ENCODE measurements at regions of chr19 and their contacts with region 1.

Region 1: GRCh38 chr19:11551603-11552235 is 7.3 kb downstream of the ELOF1 start:
- DNase-seq: no peak
- ATAC-seq: no peak
- H3K4me3 ChIP-seq: no peak overlapping the region
- H3K4me3 Mint-ChIP-seq: no peak overlapping the region
- H3K27ac ChIP-seq: no peak overlapping the region
- H3K27ac Mint-ChIP-seq: no peak overlapping the region
- H3K4me1 ChIP-seq: peaks cover 22 to 39% of the 10 kb centered on the region in 2 donors
- H3K4me1 Mint-ChIP-seq: peaks cover 38% of the 10 kb centered on the region
- H3K27me3 ChIP-seq: no peaks in the 10 kb centered on the region
- H3K27me3 Mint-ChIP-seq: no peaks in the 10 kb centered on the region
- CTCF ChIP-seq: no peak

Region 2: GRCh38 chr19:11324079-11324661 is 227.5 kb before region 1 on chr19:
- CTCF ChIA-PET with region 1: no interaction called
- POLR2A ChIA-PET with region 1: interaction called, 11 read pairs
- intact Hi-C with region 1: no loop called
- DNase-seq: peak; percentile 61
- ATAC-seq: peak; percentile 57
- H3K4me3 ChIP-seq: peak overlapping the region in 1 of 5 experiments; percentile 21
- H3K4me3 Mint-ChIP-seq: peak overlapping the region; percentile 75
- H3K27ac ChIP-seq: peak overlapping the region in 1 of 2 donors; percentile 61
- H3K27ac Mint-ChIP-seq: peak overlapping the region; percentile 68
- H3K4me1 ChIP-seq: peaks cover 31 to 43% of the 10 kb centered on the region in 2 donors
- H3K4me1 Mint-ChIP-seq: peaks cover 38% of the 10 kb centered on the region
- H3K27me3 ChIP-seq: peaks cover 0 to 5% (median 0%) of the 10 kb centered on the region in 4 experiments
- H3K27me3 Mint-ChIP-seq: no peaks in the 10 kb centered on the region
- CTCF ChIP-seq: no peak

Region 3: DNA sequence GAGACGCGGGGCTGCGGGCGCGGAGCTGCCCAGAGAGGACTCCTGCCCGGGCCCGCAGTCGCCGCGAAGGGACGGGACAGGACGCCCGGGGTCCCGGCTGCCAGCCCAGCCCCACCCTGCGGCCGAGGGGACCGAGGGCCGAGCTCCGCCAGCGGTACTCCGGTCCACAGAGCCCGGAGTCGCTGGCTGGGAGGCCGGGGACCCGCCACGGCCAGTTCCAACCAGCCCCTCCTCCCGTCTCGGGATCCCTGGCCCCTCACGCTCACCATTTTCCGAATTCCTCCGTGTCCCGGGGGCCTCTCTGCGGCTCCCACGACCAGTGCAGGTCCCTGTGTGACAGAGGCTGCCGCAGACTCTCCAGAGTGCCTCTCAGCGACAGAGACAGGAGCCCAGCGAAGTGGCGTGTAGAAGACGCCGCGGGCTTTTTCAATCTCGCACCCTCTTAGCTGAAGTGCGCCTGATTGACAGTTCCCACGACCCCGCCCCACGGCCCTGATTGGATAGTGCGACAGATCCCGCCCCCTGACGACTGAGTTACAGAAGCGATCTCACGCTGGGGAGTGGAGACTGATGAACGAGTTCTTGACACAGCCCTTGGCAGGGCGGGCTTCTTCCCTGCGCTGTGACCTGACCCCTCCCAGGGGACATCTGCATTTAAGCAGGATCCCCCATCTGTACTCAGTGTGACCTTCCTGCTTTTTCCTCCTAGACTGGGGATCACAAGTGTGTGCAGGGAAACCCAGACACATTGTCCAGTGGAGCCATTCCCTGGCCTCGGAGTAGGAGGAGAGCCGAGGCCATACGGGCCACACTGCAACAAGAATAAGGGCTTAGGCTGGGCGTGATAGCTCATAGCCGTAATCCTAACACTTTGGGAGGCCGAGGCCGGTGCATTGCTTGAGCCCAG is 143.1 kb after region 1 on chr19:
- CTCF ChIA-PET with region 1: no interaction called
- POLR2A ChIA-PET with region 1: no interaction called
- intact Hi-C with region 1: no loop called
- DNase-seq: peak; percentile 87
- ATAC-seq: peak; percentile 97
- H3K4me3 ChIP-seq: peak overlapping the region in 4 of 5 experiments; percentile 60 to 69 (median 66)
- H3K4me3 Mint-ChIP-seq: peak overlapping the region; percentile 94
- H3K27ac ChIP-seq: no peak overlapping the region
- H3K27ac Mint-ChIP-seq: peak overlapping the region; percentile 5
- H3K4me1 ChIP-seq: peaks cover 11 to 16% of the 10 kb centered on the region in 2 donors
- H3K4me1 Mint-ChIP-seq: peaks cover 12% of the 10 kb centered on the region
- H3K27me3 ChIP-seq: peaks cover 0 to 26% (median 10%) of the 10 kb centered on the region in 4 experiments
- H3K27me3 Mint-ChIP-seq: peaks cover 38% of the 10 kb centered on the region
- CTCF ChIP-seq: no peak

Measured in B cell (primary cell).